ENCODE measurements at regions of chr22 and their contacts with region 1.

Region 1: DNA sequence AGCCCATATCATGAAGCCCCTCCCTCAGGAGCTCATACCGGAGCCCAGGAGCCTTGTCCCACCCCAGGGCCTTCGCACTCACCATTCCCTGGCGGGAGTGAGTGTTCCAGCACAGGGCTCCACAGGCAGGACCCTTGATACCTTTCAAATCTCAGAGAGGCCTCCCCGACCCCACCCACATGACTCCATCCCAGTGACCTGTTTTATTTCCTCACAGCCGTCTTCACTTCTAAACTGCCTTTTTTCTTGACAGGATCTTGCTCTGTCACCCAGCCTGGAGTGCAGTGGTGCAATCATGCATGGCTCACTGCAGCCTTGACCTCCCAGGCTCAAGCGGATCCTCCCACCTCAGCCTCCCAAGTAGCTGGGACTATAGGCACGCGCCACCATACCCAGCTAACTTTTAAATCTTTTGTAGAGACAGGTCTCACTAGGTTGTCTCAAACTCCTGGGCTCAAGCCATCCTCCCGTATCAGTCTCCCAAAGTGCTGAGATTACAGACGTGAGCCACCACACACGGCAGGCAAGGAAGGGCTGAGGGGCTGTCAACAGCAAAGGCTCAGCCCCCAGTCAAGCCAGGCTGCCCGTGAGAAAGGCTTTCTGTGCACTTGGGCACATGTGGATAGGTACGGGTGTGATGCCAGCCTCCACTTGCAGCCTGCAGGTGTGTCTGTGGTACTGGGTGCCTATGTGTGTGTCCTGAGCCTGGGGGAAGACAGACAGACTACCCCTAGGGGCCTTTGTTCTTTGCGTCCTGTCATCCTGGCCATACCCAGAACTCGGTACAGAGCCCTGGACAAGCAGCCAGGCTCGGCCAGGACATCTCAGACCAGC is 9.3 kb downstream of the RPL3 start:
- DNase-seq: no peak
- ATAC-seq: no peak
- H3K4me3 ChIP-seq: no peak overlapping the region
- H3K27ac ChIP-seq: peak overlapping the region in 1 of 4 donors; percentile 1
- H3K4me1 ChIP-seq: peaks cover 17% of the 10 kb centered on the region
- H3K27me3 ChIP-seq: no peaks in the 10 kb centered on the region
- CTCF ChIP-seq: no peak
- POLR2A ChIP-seq: no peak

Region 2: GRCh38 chr22:39152511-39153219 is 157.4 kb before region 1 on chr22 and contains the start of gene CBX7:
- intact Hi-C with region 1: no loop called
- DNase-seq: peak; percentile 95 to 97 (median 96)
- ATAC-seq: peak; percentile 89
- H3K4me3 ChIP-seq: peak within 1 kb of the TSS; percentile 56 to 86
- H3K27ac ChIP-seq: peak within 1 kb of the TSS; percentile 76 to 90 (median 86)
- H3K4me1 ChIP-seq: peaks cover 51% of the 10 kb centered on the region
- H3K27me3 ChIP-seq: peaks cover 0 to 10% of the 10 kb centered on the region in 2 donors
- CTCF ChIP-seq: no peak
- POLR2A ChIP-seq: peak; percentile 69 to 87 (median 83)
- total RNA-seq, gene CBX7: 38.1 to 41.2 TPM

Region 3: GRCh38 chr22:39170825-39171622 is 139.1 kb before region 1 on chr22:
- intact Hi-C with region 1: loop called (anchors 5 kb)
- DNase-seq: peak; percentile 80 to 88 (median 86)
- ATAC-seq: peak; percentile 79
- H3K4me3 ChIP-seq: no peak overlapping the region
- H3K27ac ChIP-seq: no peak overlapping the region
- H3K4me1 ChIP-seq: peaks cover 37% of the 10 kb centered on the region
- H3K27me3 ChIP-seq: no peaks in the 10 kb centered on the region
- CTCF ChIP-seq: peak; percentile 90 to 97 (median 96)
- POLR2A ChIP-seq: no peak

Measured in body of pancreas (tissue), 4 donors.